GM12878 (cell line): ENCODE measurements at regions of chr10 and their contacts with region 1.

Region 1: DNA sequence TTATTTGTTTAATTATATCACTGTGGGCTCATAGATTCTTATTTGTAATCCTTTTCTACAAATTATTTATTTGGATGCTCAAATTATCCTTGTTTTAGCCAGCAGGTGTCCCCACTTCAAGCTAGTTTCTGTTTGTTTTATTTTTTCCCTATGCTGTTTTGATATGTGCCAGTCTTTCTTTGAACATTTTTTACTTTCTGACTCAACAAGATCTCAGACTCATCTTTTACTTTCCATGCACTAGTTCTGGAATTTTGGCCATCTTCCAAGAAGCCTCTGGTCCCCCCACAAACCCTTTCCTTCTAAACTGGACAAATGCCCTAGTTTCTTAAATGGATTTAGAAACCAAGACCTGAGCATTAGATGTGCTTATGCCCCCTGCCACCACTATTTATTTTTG is 11.5 kb upstream of the MRPS16 start:
- DNase-seq: no peak
- ATAC-seq: peak; percentile 52; the same call in 2 of the 3 replicates
- H3K4me3 ChIP-seq: no peak overlapping the region
- H3K27ac ChIP-seq: no peak overlapping the region
- H3K4me1 ChIP-seq: no peaks in the 10 kb centered on the region
- H3K27me3 ChIP-seq: no peaks in the 10 kb centered on the region
- CTCF ChIP-seq: peak; percentile 46 to 52 (median 49); a peak in 5 of 6 replicates
- EP300 ChIP-seq: no peak
- POLR2A ChIP-seq: no peak
- RAD21 ChIP-seq: peak; percentile 41

Region 2: GRCh38 chr10:73252445-73253224 is 11.3 kb before region 1 on chr10 and contains the start of gene MRPS16:
- CTCF ChIA-PET with region 1: interaction called, 14 read pairs
- POLR2A ChIA-PET with region 1: interaction called, 4 read pairs
- RAD21 ChIA-PET with region 1: no interaction called
- SMC1A ChIA-PET with region 1: interaction called, 4 read pairs
- in situ Hi-C with region 1: no loop called
- intact Hi-C with region 1: no loop called
- DNase-seq: peak; percentile 88
- ATAC-seq: peak; percentile 87
- H3K4me3 ChIP-seq: peak within 1 kb of the TSS; percentile 93
- H3K27ac ChIP-seq: peak within 1 kb of the TSS; percentile 97
- H3K4me1 ChIP-seq: peaks cover 11% of the 10 kb centered on the region
- H3K27me3 ChIP-seq: no peaks in the 10 kb centered on the region
- CTCF ChIP-seq: no peak
- EP300 ChIP-seq: no peak
- POLR2A ChIP-seq: peak; percentile 99
- RAD21 ChIP-seq: no peak
- polyA plus RNA-seq, gene MRPS16: 43.4 to 98.5 TPM

Region 3: DNA sequence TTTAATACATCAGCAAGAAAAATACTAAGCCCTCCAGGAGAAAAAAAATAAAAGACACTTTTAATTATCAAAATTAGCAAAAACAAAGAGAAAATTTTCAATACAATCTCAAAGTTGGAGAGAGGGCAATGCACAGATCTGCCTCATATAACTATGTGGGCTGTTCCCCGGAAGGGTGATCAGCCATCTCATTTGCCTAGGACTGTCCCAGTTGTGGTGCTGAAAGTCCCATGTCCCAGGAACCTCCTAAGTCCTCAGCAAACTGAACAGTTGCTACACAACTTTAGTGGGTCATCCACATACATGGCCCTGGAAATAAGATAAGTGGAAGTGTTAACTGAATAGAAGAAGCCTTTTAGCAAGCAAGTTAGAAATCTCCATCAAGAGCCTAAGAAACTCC is 80.3 kb after region 1 on chr10:
- CTCF ChIA-PET with region 1: no interaction called
- POLR2A ChIA-PET with region 1: no interaction called
- RAD21 ChIA-PET with region 1: no interaction called
- SMC1A ChIA-PET with region 1: no interaction called
- in situ Hi-C with region 1: no loop called
- intact Hi-C with region 1: no loop called
- DNase-seq: no peak
- ATAC-seq: peak; percentile 52
- H3K4me3 ChIP-seq: no peak overlapping the region
- H3K27ac ChIP-seq: no peak overlapping the region
- H3K4me1 ChIP-seq: no peaks in the 10 kb centered on the region
- H3K27me3 ChIP-seq: no peaks in the 10 kb centered on the region
- CTCF ChIP-seq: no peak
- EP300 ChIP-seq: no peak
- POLR2A ChIP-seq: no peak
- RAD21 ChIP-seq: no peak

Region 4: DNA sequence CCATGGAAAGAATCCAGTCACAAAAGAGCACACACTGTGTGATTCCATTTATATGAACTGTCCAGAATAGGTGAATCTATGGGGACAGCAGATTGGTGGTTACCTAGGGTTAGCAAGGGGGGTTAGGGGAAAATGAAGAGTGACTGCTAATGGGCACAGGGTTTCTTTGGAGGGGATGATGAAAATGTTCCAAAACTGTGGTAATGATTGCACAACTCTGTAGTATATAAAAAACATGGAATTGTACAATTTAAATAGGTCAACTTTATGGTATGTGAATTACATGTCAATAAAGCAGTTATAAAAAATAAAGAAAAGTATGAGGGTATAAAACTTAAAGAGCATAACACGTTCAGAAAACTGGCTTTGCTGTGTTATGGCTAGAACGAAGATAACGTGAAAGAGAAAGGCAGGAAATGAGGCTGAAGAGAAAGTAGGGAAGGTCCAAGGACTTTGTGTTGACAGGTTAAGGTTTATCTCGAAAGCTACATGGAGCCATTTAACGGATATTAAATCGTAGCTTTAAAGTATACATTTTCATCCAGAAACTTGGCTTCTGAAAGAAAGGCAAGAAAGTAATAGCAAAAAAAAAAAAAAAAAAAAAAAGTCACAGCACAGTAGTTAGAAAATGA is 195.9 kb after region 1 on chr10:
- CTCF ChIA-PET with region 1: no interaction called
- POLR2A ChIA-PET with region 1: no interaction called
- RAD21 ChIA-PET with region 1: no interaction called
- SMC1A ChIA-PET with region 1: no interaction called
- in situ Hi-C with region 1: no loop called
- intact Hi-C with region 1: no loop called
- DNase-seq: no peak
- ATAC-seq: no peak
- H3K4me3 ChIP-seq: no peak overlapping the region
- H3K27ac ChIP-seq: no peak overlapping the region
- H3K4me1 ChIP-seq: no peaks in the 10 kb centered on the region
- H3K27me3 ChIP-seq: no peaks in the 10 kb centered on the region
- CTCF ChIP-seq: no peak
- EP300 ChIP-seq: no peak
- POLR2A ChIP-seq: no peak
- RAD21 ChIP-seq: no peak

Region 5: GRCh38 chr10:73545357-73545756 is 281.4 kb after region 1 on chr10:
- CTCF ChIA-PET with region 1: no interaction called
- POLR2A ChIA-PET with region 1: no interaction called
- RAD21 ChIA-PET with region 1: no interaction called
- SMC1A ChIA-PET with region 1: no interaction called
- in situ Hi-C with region 1: no loop called
- intact Hi-C with region 1: no loop called
- DNase-seq: no peak
- ATAC-seq: no peak
- H3K4me3 ChIP-seq: no peak overlapping the region
- H3K27ac ChIP-seq: no peak overlapping the region
- H3K4me1 ChIP-seq: no peaks in the 10 kb centered on the region
- H3K27me3 ChIP-seq: no peaks in the 10 kb centered on the region
- CTCF ChIP-seq: no peak
- EP300 ChIP-seq: no peak
- POLR2A ChIP-seq: no peak
- RAD21 ChIP-seq: no peak